Mammary epithelial cell (primary cell): ENCODE measurements at regions of chr1 and their contacts with region 1.

Region 1: DNA sequence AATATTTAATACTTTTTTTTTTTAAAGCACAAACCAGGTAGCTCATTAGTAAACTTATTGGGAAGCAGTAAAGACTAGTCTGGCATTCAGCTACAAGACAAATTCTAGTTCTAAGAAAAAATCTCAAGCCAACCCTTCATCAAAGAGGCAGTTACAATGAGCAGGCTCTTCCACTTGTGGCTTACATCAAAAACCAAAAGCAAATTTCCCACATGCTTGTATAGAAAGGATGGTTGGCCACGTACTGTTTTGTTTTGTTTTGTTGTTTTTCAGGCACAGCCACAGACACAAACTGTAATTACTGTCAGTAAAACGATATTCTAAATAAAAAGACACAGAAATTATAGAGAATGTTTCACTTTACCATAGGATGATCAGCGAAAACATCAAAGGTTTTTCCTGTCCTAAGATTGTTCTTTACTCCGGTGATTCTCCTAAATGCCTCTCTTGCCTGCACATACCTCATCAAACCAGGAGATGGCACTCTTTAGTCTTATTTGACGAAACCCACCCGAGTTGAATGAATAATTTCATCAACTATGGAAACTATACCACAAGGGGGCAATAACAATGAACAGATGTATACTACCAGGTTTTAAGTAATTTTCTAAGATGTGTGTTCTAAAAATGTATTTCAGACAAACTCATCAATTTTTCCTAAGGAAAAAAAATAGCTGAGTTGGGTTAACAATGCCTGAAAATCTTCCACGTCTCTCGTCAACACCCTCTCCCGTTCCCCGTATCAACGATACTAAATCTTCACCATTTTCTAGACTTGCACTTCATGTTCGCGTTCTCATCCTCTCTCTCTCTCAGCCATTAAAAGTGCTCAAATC is 26.9 kb downstream of the RPL5 start:
- DNase-seq: peak; percentile 68
- H3K4me3 ChIP-seq: no peak overlapping the region
- H3K27ac ChIP-seq: no peak overlapping the region
- H3K4me1 ChIP-seq: no peaks in the 10 kb centered on the region
- H3K27me3 ChIP-seq: no peaks in the 10 kb centered on the region
- CTCF ChIP-seq: peak; percentile 88 to 99

Region 2: DNA sequence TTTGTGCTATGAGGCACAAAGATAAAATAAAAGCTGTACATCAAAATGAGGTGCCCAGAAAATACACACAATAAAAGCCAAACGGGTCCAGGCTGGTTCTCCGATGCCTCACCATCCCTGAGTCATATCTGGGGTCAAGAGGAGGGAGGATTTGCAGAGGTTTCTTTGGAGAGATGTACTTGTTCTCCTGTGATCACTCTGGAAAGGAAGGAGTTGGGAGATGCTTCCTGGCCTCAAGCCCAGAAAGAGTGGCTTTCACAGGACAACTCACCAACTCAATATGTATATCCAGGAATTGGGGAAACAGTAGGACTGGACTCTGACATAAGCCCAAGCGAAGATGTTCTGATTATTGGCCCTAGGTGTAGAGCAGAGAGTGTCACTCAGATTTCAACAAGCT is 50.5 kb after region 1 on chr1:
- CTCF ChIA-PET with region 1: interaction called, 3 read pairs
- dilution Hi-C with region 1: no loop called
- in situ Hi-C with region 1: no loop called
- intact Hi-C with region 1: loop called (anchors 1 kb)
- DNase-seq: peak; percentile 97
- H3K4me3 ChIP-seq: peak overlapping the region in 1 of 3 experiments; percentile 23
- H3K27ac ChIP-seq: peak overlapping the region; percentile 81
- H3K4me1 ChIP-seq: peaks cover 34% of the 10 kb centered on the region
- H3K27me3 ChIP-seq: no peaks in the 10 kb centered on the region
- CTCF ChIP-seq: no peak

Region 3: DNA sequence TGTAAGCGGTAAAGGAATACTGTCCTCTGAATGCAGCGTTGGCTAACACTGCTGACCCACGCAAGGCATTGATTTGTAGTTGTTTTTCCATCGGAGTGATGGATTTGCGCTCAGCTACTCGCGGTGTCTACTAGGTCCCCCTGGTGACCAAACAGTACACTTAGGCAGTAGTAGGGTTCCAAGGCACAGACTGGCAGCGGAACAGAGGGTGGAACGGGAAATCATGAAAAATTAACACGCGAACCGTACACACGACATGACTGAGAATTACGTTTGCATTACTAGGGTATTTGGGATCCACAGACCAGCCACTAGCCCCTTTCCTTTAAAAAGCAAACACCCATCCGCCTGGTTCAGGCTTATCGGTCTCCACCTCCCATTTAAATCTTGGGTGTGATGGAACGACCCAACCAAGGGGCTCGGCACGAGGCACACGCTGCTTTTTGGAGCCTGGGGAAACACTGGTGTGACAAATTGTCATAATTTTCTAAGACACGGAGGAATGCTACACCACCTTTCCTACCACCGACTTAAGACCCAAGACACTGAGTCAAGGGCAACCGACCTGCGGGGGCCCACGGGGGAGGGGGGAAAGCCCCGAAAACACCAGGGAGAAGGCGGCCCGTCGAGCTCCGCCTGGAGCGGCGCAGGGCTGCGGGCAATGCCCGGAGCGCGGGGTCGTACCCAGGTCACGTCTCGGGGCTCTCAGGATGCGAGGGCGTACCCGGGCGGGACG is 101.8 kb after region 1 on chr1:
- CTCF ChIA-PET with region 1: interaction called, 16 read pairs
- dilution Hi-C with region 1: no loop called
- in situ Hi-C with region 1: loop called in 1 of 2 experiments (anchors 5 kb)
- intact Hi-C with region 1: loop called (anchors 1 kb)
- DNase-seq: peak; percentile 81
- H3K4me3 ChIP-seq: peak overlapping the region; percentile 62 to 70 (median 67)
- H3K27ac ChIP-seq: peak overlapping the region; percentile 80
- H3K4me1 ChIP-seq: peaks cover 15% of the 10 kb centered on the region
- H3K27me3 ChIP-seq: no peaks in the 10 kb centered on the region
- CTCF ChIP-seq: peak; percentile 60 to 85

Region 4: DNA sequence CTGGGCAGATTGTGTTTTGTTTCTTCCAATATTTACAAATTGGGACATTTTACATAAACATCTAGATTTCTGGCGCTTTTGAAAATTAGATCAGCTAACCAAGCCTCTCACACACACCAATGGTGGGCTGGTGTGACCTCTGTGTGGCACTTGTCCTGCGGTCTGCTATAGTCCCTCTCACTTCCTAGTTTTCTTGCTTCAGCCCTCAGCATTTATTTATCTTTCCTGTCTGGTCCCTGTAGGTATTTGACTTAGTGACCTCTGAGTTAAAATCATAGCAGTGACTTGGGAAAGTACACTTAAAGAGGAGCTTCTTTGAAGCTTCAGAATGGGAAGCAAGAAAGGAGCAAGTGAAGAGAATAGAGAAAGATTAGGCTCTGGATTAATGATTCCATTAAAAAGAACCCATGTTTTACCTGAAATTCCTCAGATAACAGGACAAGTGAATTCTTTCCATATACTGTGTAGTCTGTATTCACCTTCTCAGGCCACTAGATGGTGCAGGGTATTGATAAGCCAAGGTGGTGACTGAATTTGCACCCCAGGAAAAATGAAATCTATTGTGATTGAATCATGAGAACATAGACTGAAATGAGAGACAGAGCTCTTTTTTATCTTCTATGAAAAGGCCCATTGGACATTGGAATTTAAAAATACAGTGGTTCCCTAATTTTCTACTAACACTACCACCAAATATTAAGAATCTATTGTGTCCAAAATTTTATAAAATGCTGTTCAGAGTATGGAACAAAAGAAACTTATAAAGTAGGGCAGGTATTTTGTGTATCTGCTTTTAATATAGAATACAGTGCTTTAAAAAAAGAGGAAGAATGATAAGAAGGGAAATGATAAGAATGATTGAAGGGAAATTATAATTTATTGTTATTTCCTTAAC is 109.6 kb after region 1 on chr1:
- CTCF ChIA-PET with region 1: no interaction called
- dilution Hi-C with region 1: no loop called
- in situ Hi-C with region 1: no loop called
- intact Hi-C with region 1: loop called (anchors 2 kb)
- DNase-seq: peak; percentile 27
- H3K4me3 ChIP-seq: no peak overlapping the region
- H3K27ac ChIP-seq: no peak overlapping the region
- H3K4me1 ChIP-seq: peaks cover 10% of the 10 kb centered on the region
- H3K27me3 ChIP-seq: no peaks in the 10 kb centered on the region
- CTCF ChIP-seq: peak; percentile 76 to 80

Region 5: GRCh38 chr1:92994105-92994712 is 135.4 kb after region 1 on chr1:
- CTCF ChIA-PET with region 1: interaction called, 5 read pairs
- dilution Hi-C with region 1: no loop called
- in situ Hi-C with region 1: loop called (anchors 10 kb)
- intact Hi-C with region 1: loop called (anchors 1 kb)
- DNase-seq: peak; percentile 50
- H3K4me3 ChIP-seq: no peak overlapping the region
- H3K27ac ChIP-seq: no peak overlapping the region
- H3K4me1 ChIP-seq: peaks cover 6% of the 10 kb centered on the region
- H3K27me3 ChIP-seq: no peaks in the 10 kb centered on the region
- CTCF ChIP-seq: peak; percentile 70 to 80

Region 6: GRCh38 chr1:93061895-93062792 is 203.4 kb after region 1 on chr1:
- CTCF ChIA-PET with region 1: no interaction called
- dilution Hi-C with region 1: no loop called
- in situ Hi-C with region 1: no loop called
- intact Hi-C with region 1: loop called (anchors 1 kb)
- DNase-seq: peak; percentile 39
- H3K4me3 ChIP-seq: no peak overlapping the region
- H3K27ac ChIP-seq: no peak overlapping the region
- H3K4me1 ChIP-seq: no peaks in the 10 kb centered on the region
- H3K27me3 ChIP-seq: peaks cover 2% of the 10 kb centered on the region
- CTCF ChIP-seq: peak; percentile 59 to 68

Region 7: DNA sequence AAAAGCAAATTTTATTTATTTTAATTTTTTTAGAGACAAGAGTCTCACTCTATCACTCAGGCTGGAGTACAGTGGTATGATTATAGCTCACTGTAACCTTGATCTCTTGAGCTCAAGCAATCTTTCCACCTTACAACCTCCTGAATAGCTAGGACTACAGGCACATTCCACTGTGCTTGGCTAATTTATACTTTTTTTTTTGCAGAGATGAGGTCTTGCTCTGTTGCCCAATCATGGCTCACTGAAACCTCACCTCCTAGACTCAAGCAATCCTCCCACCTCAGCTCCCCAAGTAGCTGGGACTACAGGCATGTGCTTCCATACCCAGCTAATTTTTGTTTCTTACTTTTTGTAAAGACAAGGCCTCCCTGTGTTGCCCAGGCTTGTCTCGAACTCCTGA is 536.4 kb after region 1 on chr1:
- CTCF ChIA-PET with region 1: no interaction called
- dilution Hi-C with region 1: no loop called
- in situ Hi-C with region 1: no loop called
- intact Hi-C with region 1: no loop called
- DNase-seq: peak; percentile 3
- H3K4me3 ChIP-seq: no peak overlapping the region
- H3K27ac ChIP-seq: no peak overlapping the region
- H3K4me1 ChIP-seq: no peaks in the 10 kb centered on the region
- H3K27me3 ChIP-seq: no peaks in the 10 kb centered on the region
- CTCF ChIP-seq: no peak